A673 (cell line): ENCODE measurements at regions of chr21 and their contacts with region 1.

Region 1: GRCh38 chr21:34510148-34511142 is 1.6 kb downstream of the KCNE1 start:
- DNase-seq: peak; percentile 64
- H3K4me3 ChIP-seq: no peak overlapping the region
- H3K27ac ChIP-seq: no peak overlapping the region
- H3K4me1 ChIP-seq: no peaks in the 10 kb centered on the region
- H3K27me3 ChIP-seq: no peaks in the 10 kb centered on the region
- CTCF ChIP-seq: peak; percentile 86

Region 2: DNA sequence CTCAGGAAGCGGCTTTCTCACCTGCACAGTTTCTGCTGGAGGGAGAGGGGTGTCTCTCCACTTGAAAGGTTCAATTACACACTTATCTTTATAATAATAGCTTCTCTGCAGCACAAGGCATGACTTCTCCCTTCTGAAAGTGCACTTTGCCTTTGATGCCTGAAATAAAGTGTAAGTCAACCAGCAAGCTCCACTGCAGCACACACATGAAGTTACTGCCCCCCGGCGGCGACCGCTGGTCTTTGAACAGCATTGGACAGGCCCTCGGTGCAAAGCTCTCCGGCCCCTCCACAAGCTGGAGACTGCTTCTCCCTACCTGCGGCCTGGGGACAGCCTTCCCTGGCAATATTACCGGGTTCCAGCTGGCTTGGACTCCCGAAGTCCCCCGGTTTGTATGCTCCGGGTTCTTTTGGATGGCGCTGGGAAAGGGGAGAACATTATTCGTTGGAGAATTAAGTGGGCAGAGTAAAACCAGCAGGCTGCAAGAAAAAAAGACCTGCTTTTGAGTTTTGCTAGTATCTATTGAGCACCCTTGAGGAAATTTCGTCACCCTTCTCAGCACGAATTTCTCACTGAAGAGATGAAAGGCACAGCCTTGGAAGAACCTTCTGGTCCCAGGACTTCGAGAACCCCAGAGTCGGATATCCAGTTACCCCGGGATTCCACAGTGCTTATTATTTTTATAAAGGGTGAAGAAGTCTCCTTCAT is 92.7 kb after region 1 on chr21:
- CTCF ChIA-PET with region 1: interaction called, 23 read pairs
- POLR2A ChIA-PET with region 1: no interaction called
- intact Hi-C with region 1: no loop called
- DNase-seq: peak; percentile 58
- H3K4me3 ChIP-seq: no peak overlapping the region
- H3K27ac ChIP-seq: no peak overlapping the region
- H3K4me1 ChIP-seq: no peaks in the 10 kb centered on the region
- H3K27me3 ChIP-seq: no peaks in the 10 kb centered on the region
- CTCF ChIP-seq: peak; percentile 74

Region 3: GRCh38 chr21:34630536-34631143 is 120.2 kb after region 1 on chr21:
- CTCF ChIA-PET with region 1: interaction called, 5 read pairs
- POLR2A ChIA-PET with region 1: no interaction called
- intact Hi-C with region 1: loop called (anchors 1 kb)
- DNase-seq: peak; percentile 68
- H3K4me3 ChIP-seq: no peak overlapping the region
- H3K27ac ChIP-seq: no peak overlapping the region
- H3K4me1 ChIP-seq: no peaks in the 10 kb centered on the region
- H3K27me3 ChIP-seq: peaks cover 11% of the 10 kb centered on the region
- CTCF ChIP-seq: peak; percentile 79